GM12878 (cell line): ENCODE measurements at regions of chr11 and their contacts with region 1.

Region 1: DNA sequence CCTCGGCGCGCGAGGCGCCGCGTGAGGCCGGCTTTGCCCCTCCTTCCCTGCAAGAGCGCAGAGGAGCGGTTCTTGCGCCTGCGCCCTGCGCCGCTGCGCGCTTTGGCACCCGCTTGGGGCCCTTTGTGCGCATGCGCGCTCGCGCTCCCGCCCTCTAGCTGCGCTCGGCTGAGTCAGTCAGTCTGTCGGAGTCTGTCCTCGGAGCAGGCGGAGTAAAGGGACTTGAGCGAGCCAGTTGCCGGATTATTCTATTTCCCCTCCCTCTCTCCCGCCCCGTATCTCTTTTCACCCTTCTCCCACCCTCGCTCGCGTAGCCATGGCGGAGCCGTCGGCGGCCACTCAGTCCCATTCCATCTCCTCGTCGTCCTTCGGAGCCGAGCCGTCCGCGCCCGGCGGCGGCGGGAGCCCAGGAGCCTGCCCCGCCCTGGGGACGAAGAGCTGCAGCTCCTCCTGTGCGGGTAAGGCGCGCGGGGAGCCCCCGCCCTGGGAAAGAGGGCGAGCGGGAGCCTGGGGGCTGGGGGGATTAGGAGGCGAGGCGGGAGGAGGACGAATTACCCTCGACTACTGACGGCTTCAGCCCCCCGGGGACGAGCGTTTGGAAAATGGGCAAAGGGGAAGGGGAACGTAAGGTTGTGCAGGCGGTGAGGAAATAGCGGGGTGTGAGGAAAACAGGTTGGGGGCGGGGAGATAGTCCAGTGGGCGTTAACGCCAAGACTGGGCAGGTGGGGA is at the start of gene RTN3:
- DNase-seq: peak; percentile 96
- ATAC-seq: peak; percentile 94
- H3K4me3 ChIP-seq: peak within 1 kb of the TSS; percentile 82
- H3K27ac ChIP-seq: peak within 1 kb of the TSS; percentile 76
- H3K4me1 ChIP-seq: peaks cover 10% of the 10 kb centered on the region
- H3K27me3 ChIP-seq: no peaks in the 10 kb centered on the region
- CTCF ChIP-seq: 0 out of 6 replicates have a peak, but pooled peaks of 1 of the 3 experiments have one; percentile 2
- EP300 ChIP-seq: no peak; a peak in 1 of 4 replicates
- POLR2A ChIP-seq: peak; percentile 90
- RAD21 ChIP-seq: no peak
- polyA plus RNA-seq, gene RTN3: 22.9 to 27.3 TPM

Region 2: GRCh38 chr11:63698976-63699733 is 17.7 kb after region 1 on chr11:
- CTCF ChIA-PET with region 1: interaction called, 10 read pairs
- POLR2A ChIA-PET with region 1: interaction called, 10 read pairs
- RAD21 ChIA-PET with region 1: interaction called, 3 read pairs
- SMC1A ChIA-PET with region 1: interaction called, 5 read pairs
- in situ Hi-C with region 1: no loop called
- intact Hi-C with region 1: no loop called
- DNase-seq: no peak
- ATAC-seq: no peak
- H3K4me3 ChIP-seq: no peak overlapping the region
- H3K27ac ChIP-seq: no peak overlapping the region
- H3K4me1 ChIP-seq: no peaks in the 10 kb centered on the region; the same call in 1 of the 2 replicates
- H3K27me3 ChIP-seq: no peaks in the 10 kb centered on the region
- CTCF ChIP-seq: no peak
- EP300 ChIP-seq: no peak
- POLR2A ChIP-seq: no peak
- RAD21 ChIP-seq: no peak

Region 3: DNA sequence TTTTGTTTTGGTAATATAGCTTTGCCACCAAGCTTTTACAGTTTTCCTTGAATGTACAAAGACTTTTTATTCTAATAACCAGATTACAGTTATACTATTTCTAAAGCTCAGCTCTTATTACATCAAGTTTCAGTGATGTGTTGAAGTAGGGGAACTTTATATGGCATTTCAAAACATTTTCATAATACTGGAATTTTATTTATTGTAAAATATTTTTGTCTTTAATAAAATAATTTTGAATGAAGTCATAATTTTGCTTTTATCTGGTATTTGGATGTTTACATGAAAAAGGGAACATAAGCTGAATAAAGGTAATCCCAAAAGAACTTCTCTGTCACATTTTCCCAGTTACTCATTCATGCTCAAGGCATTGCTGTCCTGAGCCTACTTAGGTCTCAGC is 34.6 kb after region 1 on chr11:
- CTCF ChIA-PET with region 1: no interaction called
- POLR2A ChIA-PET with region 1: no interaction called
- RAD21 ChIA-PET with region 1: no interaction called
- SMC1A ChIA-PET with region 1: no interaction called
- in situ Hi-C with region 1: no loop called
- intact Hi-C with region 1: no loop called
- DNase-seq: no peak
- ATAC-seq: no peak
- H3K4me3 ChIP-seq: no peak overlapping the region
- H3K27ac ChIP-seq: no peak overlapping the region
- H3K4me1 ChIP-seq: no peaks in the 10 kb centered on the region
- H3K27me3 ChIP-seq: no peaks in the 10 kb centered on the region
- CTCF ChIP-seq: no peak
- EP300 ChIP-seq: no peak
- POLR2A ChIP-seq: no peak
- RAD21 ChIP-seq: no peak